Activated CD4-positive, alpha-beta T cell treated with anti-CD3 and anti-CD28 coated beads for 36 hours (primary cell): ENCODE measurements at regions of chr11 and their contacts with region 1.

Region 1: GRCh38 chr11:108121274-108122155 is at the start of gene ACAT1:
- DNase-seq: peak; percentile 98
- ATAC-seq: peak; percentile 96
- H3K4me3 Mint-ChIP-seq: peak within 1 kb of the TSS; percentile 87
- H3K27ac Mint-ChIP-seq: peak within 1 kb of the TSS; percentile 85
- H3K4me1 Mint-ChIP-seq: peaks cover 40% of the 10 kb centered on the region
- H3K27me3 Mint-ChIP-seq: no peaks in the 10 kb centered on the region
- total RNA-seq, gene ACAT1: 59.0 to 67.0 TPM

Region 2: DNA sequence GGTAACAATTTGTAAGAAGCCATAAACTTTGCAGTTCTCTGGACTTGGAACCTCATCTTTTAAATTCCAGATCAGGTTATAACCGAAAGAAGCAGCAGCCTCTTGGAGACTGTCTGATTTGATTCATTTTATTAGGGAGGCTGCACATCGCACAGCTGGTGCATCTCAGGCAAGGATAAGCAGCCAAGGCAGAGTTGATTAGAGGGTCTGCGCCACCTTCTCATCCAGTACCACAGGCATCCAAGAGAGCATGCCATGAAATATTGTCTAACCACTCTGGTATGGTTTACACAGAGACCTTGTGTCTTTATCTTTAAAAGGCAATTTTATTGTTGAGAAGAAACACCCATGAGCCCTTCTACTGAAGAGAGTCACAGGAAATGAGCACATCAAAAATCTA is 647.7 kb before region 1 on chr11:
- CTCF ChIA-PET with region 1: no interaction called
- POLR2A ChIA-PET with region 1: no interaction called
- intact Hi-C with region 1: no loop called
- DNase-seq: no peak
- ATAC-seq: no peak
- H3K4me3 Mint-ChIP-seq: no peak overlapping the region
- H3K27ac Mint-ChIP-seq: no peak overlapping the region
- H3K4me1 Mint-ChIP-seq: no peaks in the 10 kb centered on the region
- H3K27me3 Mint-ChIP-seq: peaks cover 32% of the 10 kb centered on the region

Region 3: DNA sequence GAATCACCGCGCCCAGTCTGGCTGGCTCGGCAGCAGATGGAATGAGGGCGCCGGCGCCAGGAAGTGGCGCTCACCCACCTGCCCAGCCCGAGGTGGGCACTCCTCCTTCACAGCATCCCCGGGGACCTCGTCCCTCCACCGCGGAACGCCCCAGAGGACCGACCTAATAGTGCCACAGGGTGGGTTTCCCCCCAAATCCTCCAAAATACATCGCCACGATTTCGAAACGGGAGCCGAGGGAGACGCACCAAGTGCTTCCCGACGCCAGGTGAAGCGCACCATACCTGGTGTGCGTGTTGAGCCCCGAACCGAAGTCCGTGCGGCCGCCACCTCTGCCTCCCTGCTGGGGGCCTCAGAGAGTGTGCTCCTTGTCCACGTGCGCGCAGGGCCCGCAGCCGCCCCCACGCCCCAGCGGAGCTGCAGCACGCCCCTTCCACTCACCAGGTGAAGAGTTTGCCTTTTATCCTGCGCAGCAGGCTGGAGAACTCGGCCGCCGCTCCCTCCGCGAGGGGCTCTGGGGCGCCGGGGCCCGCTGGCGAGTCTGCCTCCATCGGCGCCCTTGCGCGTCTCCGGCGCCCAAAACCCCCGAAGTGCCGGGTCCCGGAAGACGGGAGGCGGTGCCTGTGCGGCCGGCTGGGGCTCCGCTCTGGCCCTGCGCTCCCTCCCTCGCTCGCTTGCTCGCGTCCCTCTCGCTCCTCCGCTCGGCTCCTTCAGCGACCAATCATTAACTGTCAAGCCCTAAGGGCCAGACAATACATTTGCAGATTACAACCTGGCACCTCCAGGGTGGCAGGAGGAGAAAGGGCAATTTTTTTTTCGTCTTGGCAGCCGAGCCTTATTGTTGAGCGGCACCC is 263.1 kb before region 1 on chr11 and contains the start of gene SLC35F2:
- CTCF ChIA-PET with region 1: no interaction called
- POLR2A ChIA-PET with region 1: no interaction called
- intact Hi-C with region 1: loop called in 1 of 2 experiments (anchors 5 kb)
- DNase-seq: peak; percentile 86
- ATAC-seq: peak; percentile 88
- H3K4me3 Mint-ChIP-seq: peak within 1 kb of the TSS; percentile 92
- H3K27ac Mint-ChIP-seq: peak within 1 kb of the TSS; percentile 94
- H3K4me1 Mint-ChIP-seq: peaks cover 31% of the 10 kb centered on the region
- H3K27me3 Mint-ChIP-seq: no peaks in the 10 kb centered on the region
- total RNA-seq, gene SLC35F2: 24.5 to 25.5 TPM

Region 4: DNA sequence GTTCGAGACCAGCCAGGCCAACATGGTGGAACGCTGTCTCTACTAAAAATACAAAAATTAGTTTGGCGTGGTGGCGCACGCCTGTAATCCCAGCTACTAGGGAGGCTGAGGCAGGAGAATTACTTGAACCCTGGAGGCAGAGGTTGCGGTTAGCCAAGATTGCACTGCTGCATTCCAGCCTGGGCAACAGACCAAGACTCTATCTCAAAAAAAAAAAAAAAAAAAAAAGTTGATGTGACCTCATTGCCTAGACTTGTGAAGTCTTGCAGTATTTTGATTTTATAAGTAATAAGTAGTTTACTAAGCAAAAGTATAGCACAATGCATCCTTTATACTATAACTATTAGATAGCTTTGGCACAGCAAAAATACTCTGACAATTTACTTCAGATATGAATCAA is 122.8 kb before region 1 on chr11:
- CTCF ChIA-PET with region 1: no interaction called
- POLR2A ChIA-PET with region 1: no interaction called
- intact Hi-C with region 1: no loop called
- DNase-seq: no peak
- ATAC-seq: no peak
- H3K4me3 Mint-ChIP-seq: no peak overlapping the region
- H3K27ac Mint-ChIP-seq: no peak overlapping the region
- H3K4me1 Mint-ChIP-seq: no peaks in the 10 kb centered on the region
- H3K27me3 Mint-ChIP-seq: peaks cover 2% of the 10 kb centered on the region

Region 5: DNA sequence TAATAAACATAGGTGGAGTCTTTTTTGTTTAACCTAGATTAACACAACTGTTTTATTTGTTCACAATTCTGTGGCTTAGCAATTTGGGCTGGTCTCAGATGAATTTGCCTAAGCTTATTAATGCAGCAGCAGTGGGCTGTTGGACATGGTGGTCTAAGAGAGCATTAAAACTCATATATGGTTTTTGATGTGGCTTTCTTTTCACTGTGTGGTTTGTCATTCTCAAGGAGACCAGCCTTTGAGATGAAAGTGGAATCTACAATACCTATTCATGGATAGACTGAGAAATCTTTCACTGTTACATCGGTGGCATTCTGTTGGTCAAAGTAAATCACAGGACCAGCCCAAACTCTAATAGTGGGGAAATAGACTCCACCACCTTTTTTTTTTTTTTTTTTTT is 73.2 kb before region 1 on chr11:
- CTCF ChIA-PET with region 1: no interaction called
- POLR2A ChIA-PET with region 1: no interaction called
- intact Hi-C with region 1: no loop called
- DNase-seq: no peak
- ATAC-seq: no peak
- H3K4me3 Mint-ChIP-seq: no peak overlapping the region
- H3K27ac Mint-ChIP-seq: no peak overlapping the region
- H3K4me1 Mint-ChIP-seq: peaks cover 8% of the 10 kb centered on the region
- H3K27me3 Mint-ChIP-seq: no peaks in the 10 kb centered on the region

Region 6: GRCh38 chr11:108302121-108302785 is 180.7 kb after region 1 on chr11:
- CTCF ChIA-PET with region 1: no interaction called
- POLR2A ChIA-PET with region 1: no interaction called
- intact Hi-C with region 1: loop called in 1 of 2 experiments (anchors 5 kb)
- DNase-seq: no peak
- ATAC-seq: peak; percentile 94
- H3K4me3 Mint-ChIP-seq: no peak overlapping the region
- H3K27ac Mint-ChIP-seq: no peak overlapping the region
- H3K4me1 Mint-ChIP-seq: peaks cover 33% of the 10 kb centered on the region
- H3K27me3 Mint-ChIP-seq: no peaks in the 10 kb centered on the region

Region 7: DNA sequence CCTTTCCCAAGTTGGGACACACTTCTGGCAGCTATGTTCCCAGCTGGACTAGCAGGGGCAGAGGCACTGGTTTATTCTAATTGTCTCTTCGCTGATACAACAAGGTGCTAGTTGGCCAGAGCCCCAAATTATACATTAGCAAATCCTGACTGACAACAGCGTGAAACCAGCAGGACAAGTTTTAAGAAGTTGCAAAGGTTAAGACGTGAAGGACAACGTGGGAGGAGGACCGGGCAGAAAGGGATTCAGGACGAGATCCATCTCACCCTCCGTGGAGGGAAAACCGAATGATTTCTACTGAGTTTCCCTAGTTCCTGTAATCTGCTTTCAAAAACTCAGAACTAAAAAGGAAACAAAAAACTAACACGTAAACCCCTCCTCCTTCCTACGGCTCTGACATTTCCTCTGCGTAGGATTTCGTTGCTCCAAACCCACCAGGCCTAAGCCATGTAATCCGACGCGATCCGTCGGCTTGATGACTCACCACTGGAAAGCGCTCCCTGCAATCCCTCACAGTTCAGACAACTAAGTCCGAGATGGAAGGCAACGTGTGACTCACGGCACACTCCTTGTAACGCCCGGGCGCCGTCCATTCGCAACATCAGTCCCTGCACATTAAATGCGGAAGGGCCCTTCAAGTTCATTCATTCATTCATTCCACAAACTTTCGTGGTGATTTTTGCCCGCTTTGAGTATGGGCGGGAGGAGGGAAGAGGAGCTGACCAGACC is 376.0 kb after region 1 on chr11:
- CTCF ChIA-PET with region 1: no interaction called
- POLR2A ChIA-PET with region 1: no interaction called
- intact Hi-C with region 1: loop called in 1 of 2 experiments (anchors 1 kb)
- DNase-seq: peak; percentile 85
- ATAC-seq: peak; percentile 91
- H3K4me3 Mint-ChIP-seq: peak overlapping the region; percentile 81
- H3K27ac Mint-ChIP-seq: peak overlapping the region; percentile 91
- H3K4me1 Mint-ChIP-seq: peaks cover 17% of the 10 kb centered on the region
- H3K27me3 Mint-ChIP-seq: no peaks in the 10 kb centered on the region

Region 8: DNA sequence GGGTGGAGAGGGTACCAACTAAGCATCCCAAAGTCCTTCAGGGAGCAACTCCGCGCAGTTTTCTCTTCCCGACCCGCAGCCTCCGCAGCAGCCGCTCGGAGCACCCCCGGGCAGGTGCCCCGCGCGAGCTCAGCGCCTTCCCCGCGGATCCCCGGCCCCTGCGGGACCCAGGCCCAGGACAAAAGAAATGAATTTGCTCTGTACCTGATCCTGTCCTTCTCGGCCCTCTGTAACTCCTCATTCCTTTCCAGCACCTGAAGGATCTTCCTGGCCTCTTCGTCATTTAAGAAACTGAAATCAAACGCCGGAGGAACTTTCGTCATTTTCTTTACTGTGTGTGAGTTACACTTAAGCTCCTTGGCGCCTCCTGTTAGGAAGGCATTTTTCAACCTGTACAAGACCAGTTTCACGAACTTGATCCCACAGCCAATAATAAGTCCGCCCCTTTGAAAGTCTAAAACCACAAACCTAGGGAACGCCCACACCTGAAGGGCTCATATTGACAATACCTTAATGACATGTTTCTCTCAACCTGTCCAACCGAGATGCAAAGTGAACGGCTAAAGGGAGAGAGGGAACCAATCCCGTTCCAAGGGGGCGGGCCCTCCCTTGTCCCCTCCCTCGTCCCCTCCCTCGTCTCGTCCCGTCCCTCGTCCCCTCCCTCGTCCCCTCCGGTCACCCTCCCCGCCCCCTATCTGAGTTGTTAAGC is 471.9 kb after region 1 on chr11 and contains the start of gene EXPH5:
- CTCF ChIA-PET with region 1: no interaction called
- POLR2A ChIA-PET with region 1: no interaction called
- intact Hi-C with region 1: loop called (anchors 5 kb)
- DNase-seq: peak; percentile 92
- ATAC-seq: peak; percentile 99
- H3K4me3 Mint-ChIP-seq: peak within 1 kb of the TSS; percentile 94
- H3K27ac Mint-ChIP-seq: peak within 1 kb of the TSS; percentile 98
- H3K4me1 Mint-ChIP-seq: peaks cover 15% of the 10 kb centered on the region
- H3K27me3 Mint-ChIP-seq: peaks cover 21% of the 10 kb centered on the region
- total RNA-seq, gene EXPH5: 2.0 to 2.4 TPM

Region 9: GRCh38 chr11:108647701-108648527 is 526.4 kb after region 1 on chr11:
- CTCF ChIA-PET with region 1: interaction called, 20 read pairs
- POLR2A ChIA-PET with region 1: interaction called, 3 read pairs
- intact Hi-C with region 1: loop called (anchors 1 kb)
- DNase-seq: peak; percentile 81
- ATAC-seq: peak; percentile 99
- H3K4me3 Mint-ChIP-seq: no peak overlapping the region
- H3K27ac Mint-ChIP-seq: no peak overlapping the region
- H3K4me1 Mint-ChIP-seq: no peaks in the 10 kb centered on the region
- H3K27me3 Mint-ChIP-seq: no peaks in the 10 kb centered on the region

Region 10: GRCh38 chr11:108664730-108665525 is 543.4 kb after region 1 on chr11 and contains the start of gene DDX10:
- CTCF ChIA-PET with region 1: interaction called, 5 read pairs
- POLR2A ChIA-PET with region 1: interaction called, 3 read pairs
- intact Hi-C with region 1: loop called in 1 of 2 experiments (anchors 1 kb)
- DNase-seq: peak; percentile 99
- ATAC-seq: peak; percentile 99
- H3K4me3 Mint-ChIP-seq: peak within 1 kb of the TSS; percentile 99
- H3K27ac Mint-ChIP-seq: peak within 1 kb of the TSS; percentile 91
- H3K4me1 Mint-ChIP-seq: peaks cover 37% of the 10 kb centered on the region
- H3K27me3 Mint-ChIP-seq: no peaks in the 10 kb centered on the region
- total RNA-seq, gene DDX10: 45.8 to 50.9 TPM